ENCODE measurements at regions of chr3 and their contacts with region 1.

Region 1: DNA sequence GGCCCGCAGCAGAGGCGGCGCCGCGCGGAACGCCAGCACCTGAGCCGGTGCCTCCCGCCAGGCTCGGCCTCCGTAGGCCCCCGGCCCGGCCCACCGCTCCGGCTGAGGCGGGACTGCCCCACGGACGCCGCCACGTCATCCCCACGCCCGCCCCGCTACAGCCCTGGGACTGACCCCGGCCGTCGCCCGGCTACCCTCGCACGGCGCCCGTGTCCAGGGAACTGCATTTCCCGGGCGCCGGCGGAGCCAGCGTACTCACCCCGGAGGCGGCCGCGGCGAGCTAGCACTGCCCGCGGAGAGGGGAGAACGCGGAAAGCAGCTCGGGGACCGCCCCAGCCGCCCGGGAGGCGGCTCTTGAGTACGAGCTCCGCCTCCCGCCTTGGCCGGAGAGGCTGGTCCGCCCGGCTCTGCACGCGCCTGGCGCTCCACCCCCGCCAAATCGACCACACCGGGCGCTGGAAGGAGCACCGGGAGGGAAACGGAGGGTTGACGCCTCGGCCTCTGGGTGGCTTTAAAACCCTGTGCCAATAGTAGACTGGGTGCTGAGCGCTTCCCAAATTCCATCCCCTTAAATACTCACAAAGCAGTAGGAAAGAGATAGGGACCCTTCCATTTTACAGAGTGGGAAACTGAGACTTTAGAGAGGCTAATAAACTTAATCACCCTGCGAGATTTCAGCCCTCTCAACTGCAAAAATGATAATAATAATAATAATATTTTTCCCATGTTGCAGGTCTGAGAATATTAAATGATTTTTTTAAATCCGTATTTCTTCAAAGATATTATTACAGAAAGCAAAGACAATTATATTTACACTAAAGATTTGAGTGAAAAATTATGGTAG is at the start of gene B4GALT4:
- DNase-seq: peak; percentile 90 to 96 (median 95)
- ATAC-seq: peak; percentile 97
- H3K4me3 ChIP-seq: peak within 1 kb of the TSS; percentile 84
- H3K27ac ChIP-seq: peak within 1 kb of the TSS; percentile 91
- H3K4me1 ChIP-seq: peaks cover 2% of the 10 kb centered on the region
- H3K27me3 ChIP-seq: no peaks in the 10 kb centered on the region
- total RNA-seq, gene B4GALT4: 11.9 to 20.1 (median 15.2) TPM

Region 2: DNA sequence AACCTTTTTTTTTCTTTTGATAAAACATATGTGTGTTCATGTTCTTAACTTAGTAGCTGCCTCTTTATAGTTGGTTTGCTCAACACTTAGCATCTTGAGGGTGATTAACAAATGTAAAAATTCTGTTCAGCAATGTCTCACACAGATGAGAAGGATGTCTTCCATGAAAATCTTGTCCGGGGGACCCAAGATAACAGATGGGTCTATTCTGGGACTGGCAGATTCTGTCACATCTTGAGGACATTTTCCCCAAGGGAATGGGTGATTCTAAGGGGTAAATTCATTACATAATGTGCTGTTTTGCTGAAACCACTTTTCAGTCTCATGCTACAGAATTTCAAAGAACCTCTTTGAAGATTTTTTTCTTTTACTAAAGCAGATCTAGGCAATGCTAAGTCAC is 548.4 kb before region 1 on chr3:
- intact Hi-C with region 1: no loop called
- DNase-seq: no peak
- ATAC-seq: no peak
- H3K4me3 ChIP-seq: no peak overlapping the region
- H3K27ac ChIP-seq: no peak overlapping the region
- H3K4me1 ChIP-seq: no peaks in the 10 kb centered on the region
- H3K27me3 ChIP-seq: no peaks in the 10 kb centered on the region

Region 3: GRCh38 chr3:119145500-119146191 is 95.2 kb before region 1 on chr3 and contains the start of gene TEX55:
- intact Hi-C with region 1: loop called in 1 of 4 experiments (anchors 10 kb)
- DNase-seq: peak; percentile 60 to 69 (median 67)
- ATAC-seq: peak; percentile 87 to 97
- H3K4me3 ChIP-seq: no peak within 1 kb of the TSS
- H3K27ac ChIP-seq: no peak within 1 kb of the TSS
- H3K4me1 ChIP-seq: no peaks in the 10 kb centered on the region
- H3K27me3 ChIP-seq: no peaks in the 10 kb centered on the region
- total RNA-seq, gene TEX55: not detected

Region 4: GRCh38 chr3:119380697-119381096 is 139.9 kb after region 1 on chr3:
- intact Hi-C with region 1: no loop called
- DNase-seq: no peak
- ATAC-seq: peak in 1 of 2 donors; percentile 54
- H3K4me3 ChIP-seq: no peak overlapping the region
- H3K27ac ChIP-seq: no peak overlapping the region
- H3K4me1 ChIP-seq: no peaks in the 10 kb centered on the region
- H3K27me3 ChIP-seq: no peaks in the 10 kb centered on the region